ENCODE measurements at regions of chr22 and their contacts with region 1.

Region 1: DNA sequence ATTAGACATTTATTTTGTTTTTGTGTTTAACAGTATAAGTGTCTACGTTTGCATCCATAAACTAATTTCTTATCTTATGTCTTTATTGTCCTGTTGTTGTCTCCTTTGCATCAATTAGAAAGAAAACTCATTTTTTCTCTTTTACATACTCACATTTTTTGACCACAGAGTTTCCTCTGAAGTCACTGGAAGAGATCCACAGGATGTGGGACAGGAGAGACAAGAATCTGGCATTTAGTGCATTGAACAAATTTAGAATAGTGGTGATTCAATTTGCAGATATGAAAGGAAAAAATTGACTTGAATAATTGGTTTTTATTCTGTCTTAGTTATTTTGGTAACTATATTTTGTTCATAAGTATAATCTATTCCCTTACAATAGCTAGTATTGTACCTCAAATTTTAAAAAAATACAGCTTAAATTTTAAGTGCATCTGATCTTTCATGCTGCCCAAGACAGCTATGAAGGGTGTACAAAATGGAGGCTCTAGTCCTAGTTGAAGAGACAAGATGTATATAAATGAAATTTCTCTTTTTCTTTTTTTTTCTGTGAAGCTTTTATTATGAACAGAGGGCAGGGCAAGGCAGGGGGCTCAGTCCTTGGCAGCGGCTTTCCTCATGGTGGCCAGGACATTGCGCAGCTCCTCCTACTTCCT is 24.4 kb downstream of the HORMAD2 start:
- DNase-seq: no peak
- ATAC-seq: no peak
- H3K4me3 ChIP-seq: no peak overlapping the region
- H3K27ac ChIP-seq: no peak overlapping the region
- H3K4me1 ChIP-seq: no peaks in the 10 kb centered on the region
- H3K27me3 ChIP-seq: no peaks in the 10 kb centered on the region
- CTCF ChIP-seq: no peak
- EP300 ChIP-seq: no peak
- POLR2A ChIP-seq: no peak
- RAD21 ChIP-seq: no peak

Region 2: DNA sequence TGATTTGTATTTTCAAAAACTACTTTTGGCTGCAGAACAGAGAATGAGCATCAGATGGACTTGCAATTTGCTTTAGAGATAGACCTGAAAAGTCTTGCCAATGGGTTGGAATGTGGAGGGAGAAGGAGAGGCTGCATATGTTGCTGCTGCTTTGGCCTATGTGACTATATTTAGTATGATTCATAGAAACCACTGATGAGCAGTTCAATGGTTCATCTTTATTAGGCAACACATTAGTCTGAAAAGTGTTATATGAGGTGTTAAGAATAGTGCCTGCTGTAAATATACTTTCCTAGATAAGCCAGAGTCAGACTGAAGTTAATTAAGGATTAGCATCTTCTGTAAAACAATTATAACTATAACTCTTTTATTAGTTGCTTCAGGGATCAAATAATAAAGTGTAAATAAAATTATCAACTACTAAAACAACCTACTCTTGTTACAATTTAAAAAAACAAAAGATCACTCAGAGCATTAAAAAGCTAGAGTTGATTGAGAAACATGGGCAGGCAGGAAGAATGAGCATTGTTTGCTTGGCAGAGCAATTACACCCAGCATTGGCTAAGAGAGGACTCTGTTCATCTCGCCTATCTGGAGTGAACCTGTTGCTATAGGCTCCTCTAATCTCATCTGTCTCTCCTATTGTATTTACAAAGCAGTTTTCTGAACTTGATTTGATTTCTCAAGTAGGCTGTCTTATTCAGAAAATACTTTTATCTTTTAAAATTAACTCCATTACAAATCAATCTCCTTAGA is 11.9 kb after region 1 on chr22:
- CTCF ChIA-PET with region 1: interaction called, 59 read pairs
- POLR2A ChIA-PET with region 1: interaction called, 3 read pairs
- RAD21 ChIA-PET with region 1: interaction called, 6 read pairs
- SMC1A ChIA-PET with region 1: interaction called, 13 read pairs
- in situ Hi-C with region 1: no loop called
- intact Hi-C with region 1: no loop called
- DNase-seq: no peak
- ATAC-seq: no peak
- H3K4me3 ChIP-seq: no peak overlapping the region
- H3K27ac ChIP-seq: no peak overlapping the region
- H3K4me1 ChIP-seq: no peaks in the 10 kb centered on the region
- H3K27me3 ChIP-seq: no peaks in the 10 kb centered on the region
- CTCF ChIP-seq: no peak
- EP300 ChIP-seq: no peak
- POLR2A ChIP-seq: no peak
- RAD21 ChIP-seq: no peak

Region 3: DNA sequence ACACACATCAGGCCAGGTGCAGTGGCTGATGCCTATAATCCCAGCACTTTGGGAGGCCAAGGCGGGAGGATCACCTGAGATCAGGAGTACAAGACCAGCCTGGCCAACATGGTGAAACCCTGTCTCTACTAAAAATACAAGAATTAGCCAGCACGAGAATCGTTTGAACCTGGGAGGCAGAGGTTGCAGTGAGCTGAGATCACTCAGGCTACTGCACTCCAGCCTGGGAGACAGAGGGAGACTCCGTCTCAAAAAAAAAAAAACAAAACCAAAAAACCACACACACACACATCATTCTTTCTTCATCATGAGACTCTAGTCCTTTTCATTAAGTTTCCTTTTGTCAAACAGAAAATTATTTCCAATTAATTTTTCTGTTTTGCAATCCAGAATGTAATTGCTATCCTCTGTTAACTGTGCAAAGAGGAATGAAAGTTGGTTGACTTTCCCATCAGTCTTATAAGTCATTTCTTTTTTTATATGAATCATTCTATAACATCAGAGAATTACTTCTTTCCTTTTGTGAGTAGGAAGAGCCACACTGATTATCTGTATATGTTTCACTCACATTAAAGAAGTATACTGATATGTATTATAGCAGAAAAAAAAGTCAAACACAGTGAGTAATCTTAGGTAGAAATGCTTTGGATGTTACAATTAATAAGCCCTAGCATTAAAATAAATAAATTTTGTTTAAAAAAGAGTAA is 27.8 kb after region 1 on chr22:
- CTCF ChIA-PET with region 1: interaction called, 12 read pairs
- POLR2A ChIA-PET with region 1: no interaction called
- RAD21 ChIA-PET with region 1: no interaction called
- SMC1A ChIA-PET with region 1: interaction called, 3 read pairs
- in situ Hi-C with region 1: no loop called
- intact Hi-C with region 1: no loop called
- DNase-seq: no peak
- ATAC-seq: no peak
- H3K4me3 ChIP-seq: no peak overlapping the region
- H3K27ac ChIP-seq: no peak overlapping the region
- H3K4me1 ChIP-seq: no peaks in the 10 kb centered on the region
- H3K27me3 ChIP-seq: no peaks in the 10 kb centered on the region; a peak in 1 of 4 replicates
- CTCF ChIP-seq: no peak
- EP300 ChIP-seq: no peak
- POLR2A ChIP-seq: no peak
- RAD21 ChIP-seq: no peak

Region 4: GRCh38 chr22:30253205-30253852 is 148.7 kb after region 1 on chr22:
- CTCF ChIA-PET with region 1: interaction called, 20 read pairs
- POLR2A ChIA-PET with region 1: no interaction called
- RAD21 ChIA-PET with region 1: interaction called, 22 read pairs
- SMC1A ChIA-PET with region 1: no interaction called
- in situ Hi-C with region 1: no loop called
- intact Hi-C with region 1: loop called (anchors 1 kb)
- DNase-seq: no peak
- ATAC-seq: peak; percentile 30
- H3K4me3 ChIP-seq: no peak overlapping the region
- H3K27ac ChIP-seq: no peak overlapping the region
- H3K4me1 ChIP-seq: peaks cover 10% of the 10 kb centered on the region
- H3K27me3 ChIP-seq: no peaks in the 10 kb centered on the region; a peak in 1 of 4 replicates
- CTCF ChIP-seq: no peak
- EP300 ChIP-seq: no peak
- POLR2A ChIP-seq: no peak
- RAD21 ChIP-seq: no peak

Region 5: DNA sequence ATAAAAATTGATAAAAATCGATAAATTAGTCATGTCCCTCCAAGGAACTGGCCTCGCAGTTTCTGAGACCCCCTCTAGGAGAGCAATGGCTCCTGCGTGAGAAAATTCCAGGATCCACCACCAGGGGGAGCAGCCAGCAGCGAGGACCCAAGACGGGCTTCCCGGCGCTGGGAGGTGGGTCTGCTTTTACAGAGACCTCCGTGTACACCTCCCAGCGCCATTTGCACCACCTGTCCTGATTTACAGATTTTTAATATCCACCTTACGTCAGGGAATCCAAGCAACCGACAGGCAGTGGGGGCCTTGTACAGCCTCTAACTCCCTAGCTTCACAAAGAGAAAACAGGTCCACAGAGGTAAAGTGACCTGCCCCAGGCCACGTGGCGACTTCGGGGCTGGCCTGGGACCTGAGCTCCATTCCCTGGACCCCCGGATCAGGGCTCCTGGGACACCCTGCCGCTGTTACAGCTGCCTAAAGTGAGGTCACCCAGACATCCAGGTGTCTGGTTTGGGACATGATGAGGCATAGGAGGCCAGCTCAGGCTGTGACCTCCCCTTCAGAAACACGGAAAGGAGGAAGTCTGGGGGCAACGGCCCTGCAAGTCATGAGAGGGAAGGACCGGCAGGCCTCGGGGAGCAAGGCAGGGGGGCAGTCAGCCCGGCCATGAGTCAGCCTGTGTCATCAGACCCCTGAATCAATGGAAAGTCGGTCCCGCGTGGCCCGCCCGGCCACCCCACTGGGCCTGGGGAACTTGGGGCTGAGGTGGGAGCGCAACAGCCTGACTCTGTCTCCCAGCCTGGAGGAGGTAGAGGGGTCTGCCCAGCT is 158.5 kb after region 1 on chr22:
- CTCF ChIA-PET with region 1: interaction called, 4 read pairs
- POLR2A ChIA-PET with region 1: no interaction called
- RAD21 ChIA-PET with region 1: interaction called, 3 read pairs
- SMC1A ChIA-PET with region 1: interaction called, 3 read pairs
- in situ Hi-C with region 1: loop called (anchors 5 kb)
- intact Hi-C with region 1: no loop called
- DNase-seq: no peak
- ATAC-seq: peak; percentile 38
- H3K4me3 ChIP-seq: 0 out of 2 replicates have a peak overlapping the region, but pooled peaks have one; percentile 12
- H3K27ac ChIP-seq: no peak overlapping the region
- H3K4me1 ChIP-seq: peaks cover 20% of the 10 kb centered on the region
- H3K27me3 ChIP-seq: no peaks in the 10 kb centered on the region
- CTCF ChIP-seq: peak; percentile 84 to 97 (median 92)
- EP300 ChIP-seq: no peak
- POLR2A ChIP-seq: no peak
- RAD21 ChIP-seq: peak; percentile 54

Region 6: GRCh38 chr22:30277547-30278344 is 173.1 kb after region 1 on chr22:
- CTCF ChIA-PET with region 1: interaction called, 74 read pairs
- POLR2A ChIA-PET with region 1: no interaction called
- RAD21 ChIA-PET with region 1: no interaction called
- SMC1A ChIA-PET with region 1: interaction called, 5 read pairs
- in situ Hi-C with region 1: no loop called
- intact Hi-C with region 1: no loop called
- DNase-seq: no peak
- ATAC-seq: no peak
- H3K4me3 ChIP-seq: no peak overlapping the region
- H3K27ac ChIP-seq: no peak overlapping the region
- H3K4me1 ChIP-seq: no peaks in the 10 kb centered on the region
- H3K27me3 ChIP-seq: no peaks in the 10 kb centered on the region; a peak in 1 of 4 replicates
- CTCF ChIP-seq: no peak
- EP300 ChIP-seq: no peak
- POLR2A ChIP-seq: no peak
- RAD21 ChIP-seq: no peak

Region 7: DNA sequence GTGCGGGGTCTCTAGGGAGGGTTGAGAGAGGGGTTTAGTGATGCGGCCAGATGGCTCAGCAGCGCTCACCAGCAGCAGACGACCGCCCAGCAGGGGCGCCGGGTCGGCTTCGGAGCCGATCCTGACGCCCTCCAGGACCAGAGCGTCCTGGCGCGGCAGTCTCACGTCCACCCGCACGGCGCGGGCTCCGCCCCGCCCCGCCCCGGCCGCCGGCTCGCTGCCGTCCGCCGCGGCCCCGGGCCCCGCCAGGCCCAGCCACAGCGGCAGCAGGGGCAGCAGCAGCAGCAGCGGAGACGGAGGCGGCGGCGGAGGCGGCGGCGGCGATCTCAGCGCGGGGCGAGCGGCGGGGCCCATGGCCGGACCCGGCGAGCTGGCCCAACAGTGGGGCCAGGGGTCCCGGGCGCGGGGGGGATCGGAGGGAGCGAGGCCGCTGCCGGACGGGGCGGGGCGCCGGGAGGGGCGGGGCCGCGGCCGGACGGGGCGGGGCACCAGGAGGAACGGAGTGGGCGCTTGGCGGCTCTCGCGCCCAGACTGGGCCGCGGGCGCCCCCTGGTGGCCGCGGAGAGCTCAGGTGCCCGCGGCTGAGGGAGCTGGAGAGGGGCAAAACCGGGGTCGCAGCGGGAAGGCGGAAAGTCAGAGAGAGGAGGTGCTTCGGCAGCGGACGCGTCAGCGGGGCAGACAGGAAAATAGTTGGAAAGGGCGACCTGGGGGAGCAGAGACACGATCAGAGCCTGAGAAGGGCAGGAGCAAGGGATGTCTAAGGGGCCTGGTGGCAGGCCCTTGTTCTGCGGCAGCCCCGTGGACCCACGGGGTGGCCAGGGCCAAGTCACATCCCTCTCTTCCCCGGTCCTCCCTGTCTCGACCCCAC is 282.6 kb after region 1 on chr22 and contains the start of gene RNF215:
- CTCF ChIA-PET with region 1: interaction called, 5 read pairs
- POLR2A ChIA-PET with region 1: no interaction called
- RAD21 ChIA-PET with region 1: interaction called, 4 read pairs
- SMC1A ChIA-PET with region 1: interaction called, 3 read pairs
- in situ Hi-C with region 1: loop called (anchors 5 kb)
- intact Hi-C with region 1: loop called (anchors 5 kb)
- DNase-seq: no peak
- ATAC-seq: peak; percentile 88
- H3K4me3 ChIP-seq: peak within 1 kb of the TSS; percentile 77; the same call in 1 of the 2 replicates
- H3K27ac ChIP-seq: no peak within 1 kb of the TSS; the same call in 1 of the 2 replicates
- H3K4me1 ChIP-seq: peaks cover 15% of the 10 kb centered on the region
- H3K27me3 ChIP-seq: no peaks in the 10 kb centered on the region
- CTCF ChIP-seq: peak; percentile 76 to 86 (median 83)
- EP300 ChIP-seq: no peak
- POLR2A ChIP-seq: no peak; the same call in 1 of the 2 replicates
- RAD21 ChIP-seq: peak; percentile 85
- polyA plus RNA-seq, gene RNF215: 0.31 TPM in 1 of 2 experiments, not detected in the other